Prostate gland (tissue), 2 donors: ENCODE measurements at regions of chr14 and their contacts with region 1.

Region 1: DNA sequence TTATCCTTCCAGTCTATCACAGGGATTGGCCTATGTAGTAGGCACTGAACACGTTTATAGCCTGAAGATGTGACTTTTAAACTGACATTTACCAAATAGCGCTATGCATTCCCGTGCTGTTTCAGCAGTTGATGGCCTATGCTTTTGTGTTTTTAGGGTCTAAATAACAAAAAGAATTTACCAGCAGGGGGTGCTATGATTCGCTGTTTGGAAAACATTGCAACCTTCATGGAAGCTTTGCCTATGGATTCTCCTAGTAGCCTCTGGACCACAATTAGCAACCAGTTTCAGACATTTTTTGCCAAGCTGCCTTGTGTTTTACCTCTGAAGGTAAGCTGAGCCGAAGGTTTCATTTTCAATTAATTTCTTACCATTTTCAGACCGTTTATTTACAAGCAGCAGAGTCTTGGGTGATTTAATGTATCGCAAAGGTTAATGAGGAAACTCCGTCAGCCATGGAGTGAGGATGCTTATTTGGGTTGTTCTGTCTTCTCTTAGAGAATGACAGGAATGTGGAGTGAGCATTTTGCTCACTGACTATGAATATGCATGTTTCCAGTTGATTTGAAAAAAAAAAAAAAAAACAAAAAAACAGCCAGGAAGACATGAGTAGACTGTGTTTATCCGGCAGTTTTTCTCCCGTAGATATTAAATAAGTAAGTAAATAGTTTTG is 133.1 kb downstream of the PRIMA1 start:
- DNase-seq: peak; percentile 50
- H3K4me3 ChIP-seq: no peak overlapping the region
- H3K27ac ChIP-seq: no peak overlapping the region
- H3K4me1 ChIP-seq: no peaks in the 10 kb centered on the region
- H3K27me3 ChIP-seq: no peaks in the 10 kb centered on the region
- CTCF ChIP-seq: peak; percentile 46 to 75 (median 66)
- POLR2A ChIP-seq: no peak

Region 2: DNA sequence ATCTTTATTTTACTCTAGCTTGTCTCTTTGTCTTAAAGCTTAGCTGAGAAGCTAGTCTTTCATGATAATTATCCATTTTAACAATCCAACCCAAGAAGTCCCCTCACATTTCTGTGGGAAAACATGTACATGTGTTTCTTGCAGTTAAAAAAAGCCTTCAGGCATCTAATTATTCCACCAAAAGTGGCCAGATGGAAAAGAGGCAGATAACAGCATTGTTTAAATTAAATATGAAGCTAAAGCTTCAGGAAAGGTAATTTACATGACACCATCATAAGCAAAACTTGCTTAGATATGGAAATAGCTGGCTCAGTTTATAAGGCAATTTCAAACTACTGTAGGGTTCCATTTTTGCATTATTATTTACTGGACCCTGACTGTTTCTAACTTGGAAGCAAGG is 49.1 kb before region 1 on chr14:
- intact Hi-C with region 1: no loop called
- DNase-seq: no peak
- H3K4me3 ChIP-seq: no peak overlapping the region
- H3K27ac ChIP-seq: no peak overlapping the region
- H3K4me1 ChIP-seq: no peaks in the 10 kb centered on the region
- H3K27me3 ChIP-seq: no peaks in the 10 kb centered on the region
- CTCF ChIP-seq: no peak
- POLR2A ChIP-seq: no peak

Region 3: DNA sequence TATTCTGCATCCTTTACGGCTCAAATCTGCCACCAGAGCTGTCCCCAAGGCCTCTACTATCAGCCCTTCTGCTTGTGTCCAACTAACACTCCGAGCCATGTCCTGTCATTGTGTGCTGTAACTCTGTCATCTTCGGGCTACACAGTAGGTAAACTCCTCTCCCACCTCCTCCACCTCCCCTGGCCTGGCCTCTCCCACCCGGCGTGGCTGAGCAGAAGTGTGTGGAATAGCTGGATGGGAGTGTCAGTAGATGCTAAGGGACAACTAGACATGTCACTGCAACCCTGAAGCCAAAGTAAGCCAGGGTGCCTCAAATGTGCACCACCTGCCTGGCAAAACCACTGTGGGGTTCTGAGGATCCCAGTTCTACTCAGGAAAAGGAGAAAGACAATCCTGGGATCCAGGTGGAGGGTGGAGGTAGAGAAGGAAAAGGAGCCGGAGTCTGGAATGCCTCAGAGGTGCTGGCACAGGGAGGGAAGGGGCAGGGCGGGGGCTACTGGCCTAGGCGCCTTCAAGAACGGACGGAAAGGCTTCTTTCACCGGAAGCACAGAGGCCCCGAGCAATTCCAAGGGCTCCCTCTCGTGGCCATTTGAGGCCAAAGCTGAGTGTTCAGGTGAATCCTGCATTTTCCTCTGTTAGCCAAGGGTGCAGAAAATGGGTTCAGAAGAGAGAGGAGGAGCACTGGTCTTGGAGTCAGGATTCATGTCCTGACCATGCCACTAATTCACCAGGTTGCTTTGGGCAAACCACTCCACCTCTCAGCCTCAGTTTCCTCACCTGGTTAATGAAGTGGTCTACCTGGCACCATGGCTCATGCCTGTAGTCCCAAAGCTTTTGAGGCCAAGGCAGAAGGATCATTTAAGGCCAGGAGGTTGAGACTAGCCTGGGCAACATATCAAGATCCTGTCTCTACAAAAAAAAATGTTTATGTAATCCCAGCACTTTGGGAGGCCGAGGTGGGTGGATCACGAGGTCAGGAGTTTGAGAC is 251.4 kb after region 1 on chr14:
- intact Hi-C with region 1: loop called (anchors 1 kb)
- DNase-seq: peak; percentile 61
- H3K4me3 ChIP-seq: no peak overlapping the region
- H3K27ac ChIP-seq: no peak overlapping the region
- H3K4me1 ChIP-seq: no peaks in the 10 kb centered on the region
- H3K27me3 ChIP-seq: no peaks in the 10 kb centered on the region
- CTCF ChIP-seq: peak in 3 of 4 experiments; percentile 65 to 67 (median 66)
- POLR2A ChIP-seq: no peak

Region 4: GRCh38 chr14:93994919-93995682 is 339.9 kb after region 1 on chr14:
- intact Hi-C with region 1: loop called (anchors 10 kb)
- DNase-seq: no peak
- H3K4me3 ChIP-seq: no peak overlapping the region
- H3K27ac ChIP-seq: no peak overlapping the region
- H3K4me1 ChIP-seq: no peaks in the 10 kb centered on the region
- H3K27me3 ChIP-seq: no peaks in the 10 kb centered on the region
- CTCF ChIP-seq: no peak
- POLR2A ChIP-seq: no peak